ENCODE measurements at regions of chr9 and their contacts with region 1.

Region 1: DNA sequence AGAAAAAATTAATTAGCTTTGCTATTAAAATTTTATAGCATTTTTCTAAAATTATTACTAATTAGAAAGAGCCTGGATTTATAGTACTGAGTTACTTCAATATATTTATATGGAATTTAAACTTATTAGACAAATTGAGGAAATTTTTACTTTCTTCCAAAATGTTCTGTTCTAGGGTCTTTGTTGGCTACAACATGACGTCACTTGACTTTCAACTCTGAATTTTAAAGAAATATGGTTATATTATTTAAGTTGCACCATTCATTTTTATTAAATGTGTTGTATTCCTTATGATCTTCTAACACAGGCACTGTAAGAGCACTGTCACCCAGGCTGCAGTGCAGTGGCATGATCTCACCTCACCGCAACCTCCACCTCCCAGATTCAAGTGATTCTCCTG is 119.5 kb upstream of the CYLC2 start:
- DNase-seq: no peak
- H3K4me3 Mint-ChIP-seq: no peak overlapping the region
- H3K27ac Mint-ChIP-seq: no peak overlapping the region
- H3K4me1 Mint-ChIP-seq: no peaks in the 10 kb centered on the region
- H3K27me3 Mint-ChIP-seq: no peaks in the 10 kb centered on the region

Region 2: GRCh38 chr9:102669220-102669619 is 206.5 kb before region 1 on chr9:
- intact Hi-C with region 1: no loop called
- DNase-seq: no peak
- H3K4me3 Mint-ChIP-seq: no peak overlapping the region
- H3K27ac Mint-ChIP-seq: no peak overlapping the region
- H3K4me1 Mint-ChIP-seq: no peaks in the 10 kb centered on the region
- H3K27me3 Mint-ChIP-seq: no peaks in the 10 kb centered on the region

Region 3: DNA sequence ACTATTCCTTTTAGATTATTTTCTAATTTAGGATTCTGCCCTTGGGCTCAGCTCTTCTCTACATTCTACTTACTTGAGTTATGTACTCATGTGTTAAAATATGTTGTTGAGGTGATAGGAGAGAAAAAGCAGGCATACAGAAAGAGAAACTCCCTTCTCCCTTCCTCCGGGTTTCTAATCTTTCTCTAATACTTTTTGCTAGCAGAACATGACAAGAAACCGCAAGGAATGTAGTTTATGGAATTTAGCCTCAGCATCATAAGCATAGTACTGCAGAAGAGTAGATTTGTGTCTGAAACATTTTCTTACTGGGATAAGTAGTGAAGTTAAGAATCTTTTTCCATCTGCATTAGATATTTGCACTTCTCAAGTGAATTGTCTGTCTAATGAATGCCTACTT is 20.0 kb before region 1 on chr9:
- intact Hi-C with region 1: no loop called
- DNase-seq: no peak
- H3K4me3 Mint-ChIP-seq: no peak overlapping the region
- H3K27ac Mint-ChIP-seq: no peak overlapping the region
- H3K4me1 Mint-ChIP-seq: no peaks in the 10 kb centered on the region
- H3K27me3 Mint-ChIP-seq: no peaks in the 10 kb centered on the region

Region 4: GRCh38 chr9:102941868-102942267 is 66.2 kb after region 1 on chr9:
- intact Hi-C with region 1: loop called (anchors 10 kb)
- DNase-seq: no peak
- H3K4me3 Mint-ChIP-seq: no peak overlapping the region
- H3K27ac Mint-ChIP-seq: no peak overlapping the region
- H3K4me1 Mint-ChIP-seq: no peaks in the 10 kb centered on the region
- H3K27me3 Mint-ChIP-seq: no peaks in the 10 kb centered on the region

Measured in activated T-helper 1 cell treated with anti-CD3 and anti-CD28 coated beads, Interleukin-12 subunit alpha, Interleukin-12 subunit beta, Interleukin-2, Interleukin-4 antibody, amounts not matched to agents 30 ng/mL and 10 ng/mL and 1 ng/mL, durations not matched to agents 14 hours and 24 hours and 36 hours (primary cell).